ENCODE measurements at regions of chr7 and their contacts with region 1.

Region 1: DNA sequence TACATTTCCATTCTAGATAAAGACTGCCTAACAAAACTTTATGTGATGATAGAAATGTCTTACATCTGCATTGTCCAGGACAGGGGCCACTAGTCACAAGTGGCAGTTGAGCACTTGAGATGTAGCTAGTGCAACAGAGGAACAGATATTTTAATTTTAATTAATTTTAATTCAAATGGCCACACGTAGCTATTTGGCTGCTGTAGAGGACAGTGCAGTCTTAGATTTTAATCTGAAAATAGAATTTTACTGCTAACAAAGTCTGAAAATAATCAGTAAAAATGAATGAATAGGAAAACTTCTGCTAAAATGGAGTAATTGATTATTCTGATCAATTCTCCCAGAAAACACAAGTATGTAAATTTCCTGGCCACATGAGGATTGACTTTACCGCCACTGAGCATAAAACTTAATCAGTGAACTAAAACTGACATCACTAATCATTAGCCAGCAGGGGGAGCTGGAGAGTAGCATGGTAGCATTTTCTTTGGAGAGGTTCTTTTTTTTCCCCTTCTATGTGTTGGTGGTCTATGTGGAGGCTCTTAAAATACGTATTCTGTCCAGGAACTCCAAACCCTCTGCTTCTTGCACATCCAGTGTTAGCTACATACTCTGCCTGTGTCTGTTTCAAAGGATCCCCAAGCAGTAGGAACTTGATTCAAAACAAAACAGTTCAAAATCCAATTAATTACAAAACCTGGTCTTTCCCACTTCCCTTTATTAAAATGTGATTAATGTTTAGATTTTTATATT is 52.1 kb downstream of the TSPAN12 start:
- DNase-seq: peak; percentile 44
- ATAC-seq: peak; percentile 55
- H3K4me3 ChIP-seq: no peak overlapping the region
- H3K27ac ChIP-seq: no peak overlapping the region
- H3K4me1 ChIP-seq: no peaks in the 10 kb centered on the region
- H3K27me3 ChIP-seq: no peaks in the 10 kb centered on the region
- CTCF ChIP-seq: peak; percentile 73
- EP300 ChIP-seq: no peak
- POLR2A ChIP-seq: no peak
- RAD21 ChIP-seq: no peak

Region 2: DNA sequence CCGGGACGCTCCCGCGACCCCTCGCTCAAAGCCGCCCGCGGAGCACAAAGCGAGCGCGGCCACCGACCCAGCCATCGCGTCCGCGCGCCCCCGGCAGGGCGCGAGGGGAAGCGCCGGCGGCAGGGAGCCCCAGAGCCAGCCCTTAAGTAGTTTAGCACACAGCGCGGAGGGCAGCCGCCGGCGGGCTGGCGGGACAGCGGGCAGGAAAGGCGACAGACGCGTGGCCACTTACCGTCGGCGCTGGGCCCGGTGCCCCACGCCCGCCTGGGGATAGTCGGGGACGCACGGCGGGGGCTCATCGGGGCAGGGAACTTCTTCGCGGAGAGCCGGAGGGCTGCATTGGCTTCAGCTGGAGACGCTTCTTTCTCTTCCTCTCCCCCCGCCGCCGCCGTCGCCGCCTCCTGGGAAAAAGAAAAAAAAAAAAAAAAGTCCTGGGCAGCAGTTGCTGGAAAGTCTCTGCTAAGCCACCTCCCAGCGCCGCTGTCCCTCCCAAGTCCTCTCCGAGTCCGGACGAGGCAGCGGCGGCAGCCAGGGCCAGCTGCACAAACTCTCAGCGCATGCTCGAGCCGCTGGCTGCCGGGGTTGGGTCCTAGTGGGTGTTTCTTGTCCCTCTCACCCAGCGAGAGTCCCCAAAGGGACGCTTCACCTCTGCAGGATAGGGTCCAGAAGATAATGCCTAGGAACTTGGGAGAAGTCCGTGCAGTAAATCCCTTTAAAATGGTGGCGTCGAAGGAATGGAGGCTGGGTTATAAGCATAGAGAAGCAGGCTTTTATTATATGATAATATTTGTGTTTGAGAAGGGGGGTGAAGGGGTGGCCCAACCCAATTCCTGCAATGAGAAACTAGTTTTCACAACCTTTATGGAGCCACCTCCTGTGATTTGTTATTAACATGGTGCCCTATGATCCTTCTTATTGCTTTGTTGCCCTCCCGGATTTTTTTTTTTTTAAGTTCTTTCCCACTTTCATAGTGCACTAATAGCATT is 52.1 kb after region 1 on chr7 and contains the start of gene TSPAN12:
- CTCF ChIA-PET with region 1: no interaction called
- POLR2A ChIA-PET with region 1: no interaction called
- in situ Hi-C with region 1: no loop called
- intact Hi-C with region 1: loop called (anchors 1 kb)
- DNase-seq: peak; percentile 39
- ATAC-seq: peak; percentile 98
- H3K4me3 ChIP-seq: peak within 1 kb of the TSS; percentile 61 to 75 (median 70)
- H3K27ac ChIP-seq: no peak within 1 kb of the TSS
- H3K4me1 ChIP-seq: peaks cover 6% of the 10 kb centered on the region
- H3K27me3 ChIP-seq: no peaks in the 10 kb centered on the region; a peak in 1 of 5 replicates
- CTCF ChIP-seq: peak; percentile 62
- EP300 ChIP-seq: no peak
- POLR2A ChIP-seq: no peak
- RAD21 ChIP-seq: peak; percentile 55
- total RNA-seq, gene TSPAN12: 0.70 and 0.95 TPM in 2 replicates

Region 3: DNA sequence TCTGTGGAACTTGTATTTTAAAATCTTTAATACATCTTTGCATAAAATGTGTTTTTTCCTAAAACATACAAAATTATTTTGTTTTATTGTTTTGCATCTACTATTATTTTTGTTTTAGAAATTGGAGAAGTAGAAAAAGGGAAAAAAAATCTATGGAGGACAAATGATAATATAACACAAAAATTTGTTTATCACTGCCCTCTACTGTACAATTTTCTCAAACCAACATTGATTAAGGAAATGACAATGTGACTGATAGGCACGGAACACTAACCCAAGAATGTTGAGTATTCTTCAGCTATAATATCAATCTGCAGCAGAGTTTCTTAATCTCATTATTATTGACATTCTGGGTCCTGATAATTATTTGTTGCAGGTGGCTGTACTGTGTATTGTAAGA is 135.3 kb after region 1 on chr7:
- CTCF ChIA-PET with region 1: interaction called, 13 read pairs
- POLR2A ChIA-PET with region 1: no interaction called
- in situ Hi-C with region 1: loop called (anchors 5 kb)
- intact Hi-C with region 1: loop called (anchors 1 kb)
- DNase-seq: no peak
- ATAC-seq: 0 out of 3 replicates have a peak, but pooled peaks have one; percentile 43
- H3K4me3 ChIP-seq: no peak overlapping the region
- H3K27ac ChIP-seq: no peak overlapping the region
- H3K4me1 ChIP-seq: no peaks in the 10 kb centered on the region
- H3K27me3 ChIP-seq: no peaks in the 10 kb centered on the region
- CTCF ChIP-seq: peak; percentile 27; the same call in 1 of the 2 replicates
- EP300 ChIP-seq: no peak
- POLR2A ChIP-seq: no peak
- RAD21 ChIP-seq: no peak

Region 4: GRCh38 chr7:121081327-121081936 is 275.6 kb after region 1 on chr7:
- CTCF ChIA-PET with region 1: interaction called, 19 read pairs
- POLR2A ChIA-PET with region 1: no interaction called
- in situ Hi-C with region 1: no loop called
- intact Hi-C with region 1: loop called (anchors 1 kb)
- DNase-seq: peak; percentile 36
- ATAC-seq: peak; percentile 52
- H3K4me3 ChIP-seq: no peak overlapping the region
- H3K27ac ChIP-seq: no peak overlapping the region
- H3K4me1 ChIP-seq: peaks cover 11% of the 10 kb centered on the region
- H3K27me3 ChIP-seq: no peaks in the 10 kb centered on the region
- CTCF ChIP-seq: peak; percentile 68
- EP300 ChIP-seq: no peak
- POLR2A ChIP-seq: no peak
- RAD21 ChIP-seq: 0 out of 2 replicates have a peak, but pooled peaks have one; percentile 19

Region 5: DNA sequence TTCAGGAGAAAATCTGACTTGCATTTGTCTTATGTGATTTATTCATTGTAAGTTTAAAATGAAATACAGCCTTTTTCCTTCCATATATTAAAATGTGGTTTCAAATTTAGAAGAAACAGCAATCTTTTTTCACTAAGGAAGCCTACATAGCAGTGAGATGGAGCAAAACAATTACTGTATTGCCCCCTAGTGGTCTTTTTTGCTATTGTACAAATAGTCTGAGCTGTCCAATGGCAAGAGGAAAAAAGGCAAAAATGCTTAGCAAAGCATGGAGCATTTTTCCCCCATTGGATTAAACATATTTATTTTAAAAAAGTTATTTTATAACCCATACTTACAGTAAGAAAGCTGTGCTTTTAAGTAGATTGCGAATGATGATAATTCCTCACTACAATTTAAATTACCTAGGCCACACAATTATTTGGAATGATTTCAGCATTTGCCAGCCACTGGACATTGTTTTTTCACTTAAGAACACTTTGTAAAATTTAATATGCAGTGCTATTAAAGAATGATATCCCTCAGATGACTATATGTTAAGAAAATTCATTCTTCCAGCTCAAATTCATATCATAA is 302.2 kb after region 1 on chr7:
- CTCF ChIA-PET with region 1: interaction called, 12 read pairs
- POLR2A ChIA-PET with region 1: no interaction called
- in situ Hi-C with region 1: loop called (anchors 10 kb)
- intact Hi-C with region 1: no loop called
- DNase-seq: peak; percentile 53
- ATAC-seq: peak; percentile 94
- H3K4me3 ChIP-seq: no peak overlapping the region
- H3K27ac ChIP-seq: no peak overlapping the region
- H3K4me1 ChIP-seq: no peaks in the 10 kb centered on the region
- H3K27me3 ChIP-seq: no peaks in the 10 kb centered on the region
- CTCF ChIP-seq: peak; percentile 68
- EP300 ChIP-seq: no peak
- POLR2A ChIP-seq: no peak
- RAD21 ChIP-seq: no peak